WTC11 (cell line): ENCODE measurements at regions of chr7 and their contacts with region 1.

Region 1: DNA sequence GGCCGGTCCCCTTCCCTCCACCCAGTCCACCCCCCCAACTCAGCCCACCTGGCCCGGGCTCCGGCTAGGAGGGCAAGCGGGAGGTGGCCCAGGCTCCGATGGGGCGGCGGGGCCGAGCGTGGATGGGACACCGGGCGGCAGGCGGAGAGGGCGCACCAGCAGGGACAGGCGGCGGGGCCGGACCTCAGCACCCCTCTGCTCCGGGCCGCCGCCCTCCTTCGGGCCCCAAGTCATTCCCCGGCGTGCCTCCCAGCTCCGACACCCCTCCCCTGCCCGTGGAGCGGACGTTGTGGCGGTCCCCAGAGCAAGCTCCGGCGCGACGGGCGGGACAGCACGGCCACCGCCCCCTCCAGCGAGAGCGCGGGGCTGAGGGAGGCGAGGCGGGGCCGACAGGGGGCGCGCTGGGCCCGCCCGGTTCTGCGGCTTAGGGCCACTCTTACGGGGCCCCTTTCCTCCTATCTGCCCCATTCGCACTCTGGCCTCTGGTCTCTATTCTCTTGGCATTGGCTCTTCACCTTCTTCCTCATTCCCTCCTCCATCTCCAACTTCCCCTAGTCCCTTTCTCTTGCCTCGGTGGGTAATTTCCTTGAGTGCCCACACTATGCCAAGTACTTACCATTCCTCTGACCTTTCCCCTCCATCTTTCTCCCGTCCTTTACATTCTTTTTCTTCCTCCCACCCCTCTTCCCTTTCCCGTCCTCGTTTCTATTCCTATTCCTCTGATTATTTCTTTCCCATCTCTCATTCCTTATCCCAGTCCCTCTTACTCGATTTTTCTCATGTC is 701 bp upstream of the GBX1 start:
- DNase-seq: peak; percentile 75
- ATAC-seq: peak; percentile 79
- H3K4me3 Mint-ChIP-seq: peak overlapping the region; percentile 67
- H3K27ac Mint-ChIP-seq: no peak overlapping the region
- H3K4me1 Mint-ChIP-seq: peaks cover 13% of the 10 kb centered on the region
- H3K27me3 Mint-ChIP-seq: peaks cover 52% of the 10 kb centered on the region
- CTCF ChIP-seq: peak; percentile 76

Region 2: GRCh38 chr7:151137076-151137675 is 31.0 kb before region 1 on chr7:
- CTCF ChIA-PET with region 1: interaction called, 48 read pairs
- POLR2A ChIA-PET with region 1: no interaction called
- DNase-seq: peak; percentile 39
- ATAC-seq: peak; percentile 24
- H3K4me3 Mint-ChIP-seq: no peak overlapping the region
- H3K27ac Mint-ChIP-seq: no peak overlapping the region
- H3K4me1 Mint-ChIP-seq: peaks cover 21% of the 10 kb centered on the region
- H3K27me3 Mint-ChIP-seq: no peaks in the 10 kb centered on the region
- CTCF ChIP-seq: no peak

Region 3: GRCh38 chr7:151157645-151158329 is 10.4 kb before region 1 on chr7:
- CTCF ChIA-PET with region 1: interaction called, 20 read pairs
- POLR2A ChIA-PET with region 1: interaction called, 6 read pairs
- DNase-seq: no peak
- ATAC-seq: peak; percentile 67
- H3K4me3 Mint-ChIP-seq: no peak overlapping the region
- H3K27ac Mint-ChIP-seq: no peak overlapping the region
- H3K4me1 Mint-ChIP-seq: 0 out of 2 replicates have a peak, but pooled peaks cover 3% of the 10 kb centered on the region
- H3K27me3 Mint-ChIP-seq: peaks cover 19% of the 10 kb centered on the region
- CTCF ChIP-seq: no peak

Region 4: DNA sequence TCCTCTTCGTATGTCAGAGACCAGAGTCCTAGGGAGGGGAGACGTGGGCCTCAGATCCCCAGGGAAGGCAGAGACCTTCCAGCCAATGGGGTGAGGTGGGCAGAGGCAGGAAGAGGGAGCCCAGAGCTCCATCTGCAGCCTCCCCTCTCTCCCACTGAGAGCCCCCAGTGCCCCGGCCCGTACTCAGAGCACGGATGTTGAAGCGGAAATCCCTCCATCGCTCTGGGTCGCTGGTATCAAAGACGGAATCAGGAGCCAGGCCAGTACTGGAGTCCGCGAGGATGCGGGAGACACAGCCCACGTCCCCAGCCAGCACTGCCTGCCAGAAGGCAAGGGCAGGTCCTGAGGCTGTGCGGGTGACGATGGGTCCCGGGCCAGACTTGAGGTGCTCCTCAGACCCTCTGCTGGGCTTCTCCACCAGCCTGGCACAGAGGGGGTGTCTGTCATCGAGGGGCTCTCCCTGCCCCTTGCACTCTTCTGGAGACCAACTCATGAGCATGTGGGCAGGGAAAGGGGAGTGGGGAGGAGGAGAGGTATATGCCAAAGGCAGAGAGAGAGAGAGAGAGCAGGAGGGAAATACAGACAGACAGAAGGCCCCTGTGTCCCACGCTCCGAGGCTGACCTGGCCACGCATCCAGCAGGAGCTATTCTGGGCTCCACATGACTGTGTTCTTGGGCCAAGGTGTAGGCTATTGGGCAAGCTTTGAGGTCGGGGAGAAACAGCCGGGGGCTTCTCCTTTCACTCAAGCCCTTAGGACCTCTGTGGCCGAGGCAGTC is 18.6 kb after region 1 on chr7 and contains the start of gene ASB10:
- CTCF ChIA-PET with region 1: no interaction called
- POLR2A ChIA-PET with region 1: no interaction called
- DNase-seq: no peak
- ATAC-seq: no peak
- H3K4me3 Mint-ChIP-seq: no peak within 1 kb of the TSS
- H3K27ac Mint-ChIP-seq: no peak within 1 kb of the TSS
- H3K4me1 Mint-ChIP-seq: no peaks in the 10 kb centered on the region
- H3K27me3 Mint-ChIP-seq: no peaks in the 10 kb centered on the region; the same call in 1 of the 2 replicates
- CTCF ChIP-seq: no peak
- total RNA-seq, gene ASB10: not detected in 3 replicates

Region 5: GRCh38 chr7:151204383-151205032 is 36.3 kb after region 1 on chr7:
- CTCF ChIA-PET with region 1: no interaction called
- POLR2A ChIA-PET with region 1: no interaction called
- DNase-seq: no peak
- ATAC-seq: no peak
- H3K4me3 Mint-ChIP-seq: no peak overlapping the region
- H3K27ac Mint-ChIP-seq: no peak overlapping the region
- H3K4me1 Mint-ChIP-seq: peaks cover 1% of the 10 kb centered on the region
- H3K27me3 Mint-ChIP-seq: peaks cover 7% of the 10 kb centered on the region
- CTCF ChIP-seq: no peak